GM12878 (cell line): ENCODE measurements at regions of chr12 and their contacts with region 1.

Region 1: DNA sequence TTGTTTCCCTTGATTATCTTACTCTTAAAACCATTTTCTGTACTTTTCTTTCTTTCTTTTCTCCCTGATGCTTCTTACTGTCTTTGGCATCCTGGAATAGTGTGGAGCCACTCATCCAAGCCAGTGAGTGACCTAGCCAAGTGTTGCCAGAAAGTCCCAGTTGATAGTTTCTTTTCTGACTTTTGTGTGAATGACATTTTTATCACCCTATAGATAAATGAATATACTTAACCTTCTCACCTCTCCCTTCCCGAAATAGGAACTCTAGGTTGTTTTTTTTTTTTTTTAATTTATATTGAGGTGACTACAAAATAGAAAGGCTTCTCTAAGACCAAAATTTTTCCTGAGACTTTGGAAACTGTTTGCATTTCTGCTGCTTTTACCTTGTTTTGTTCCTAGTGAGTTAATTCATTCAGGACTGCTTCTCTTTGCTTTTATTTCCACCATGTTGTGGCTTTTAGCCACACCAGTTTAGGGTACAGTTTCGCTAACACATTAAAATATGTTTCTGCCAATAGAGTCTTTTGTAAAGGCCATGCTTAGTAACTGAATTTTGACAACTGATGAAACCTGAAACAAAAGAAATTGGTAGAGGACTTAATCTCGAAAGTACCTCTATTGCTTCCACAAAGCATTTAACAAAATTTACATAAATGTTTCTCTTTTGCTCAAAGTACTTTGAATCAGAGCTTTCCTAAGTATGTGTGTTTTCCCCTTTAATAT is 194.6 kb downstream of the ERC1 start:
- DNase-seq: peak; percentile 56
- ATAC-seq: peak; percentile 97
- H3K4me3 ChIP-seq: 0 out of 2 replicates have a peak overlapping the region, but pooled peaks have one; percentile 44
- H3K27ac ChIP-seq: no peak overlapping the region; the same call in 1 of the 2 replicates
- H3K4me1 ChIP-seq: peaks cover 9% of the 10 kb centered on the region
- H3K27me3 ChIP-seq: no peaks in the 10 kb centered on the region
- CTCF ChIP-seq: no peak
- EP300 ChIP-seq: peak in 1 of 2 experiments; percentile 37; a peak in 1 of 4 replicates
- POLR2A ChIP-seq: no peak
- RAD21 ChIP-seq: no peak

Region 2: GRCh38 chr12:1173781-1174617 is 11.6 kb before region 1 on chr12:
- CTCF ChIA-PET with region 1: interaction called, 7 read pairs
- POLR2A ChIA-PET with region 1: no interaction called
- RAD21 ChIA-PET with region 1: no interaction called
- SMC1A ChIA-PET with region 1: interaction called, 11 read pairs
- in situ Hi-C with region 1: no loop called
- intact Hi-C with region 1: no loop called
- DNase-seq: no peak
- ATAC-seq: no peak
- H3K4me3 ChIP-seq: no peak overlapping the region
- H3K27ac ChIP-seq: no peak overlapping the region
- H3K4me1 ChIP-seq: no peaks in the 10 kb centered on the region
- H3K27me3 ChIP-seq: no peaks in the 10 kb centered on the region
- CTCF ChIP-seq: no peak
- EP300 ChIP-seq: no peak
- POLR2A ChIP-seq: no peak
- RAD21 ChIP-seq: no peak

Region 3: DNA sequence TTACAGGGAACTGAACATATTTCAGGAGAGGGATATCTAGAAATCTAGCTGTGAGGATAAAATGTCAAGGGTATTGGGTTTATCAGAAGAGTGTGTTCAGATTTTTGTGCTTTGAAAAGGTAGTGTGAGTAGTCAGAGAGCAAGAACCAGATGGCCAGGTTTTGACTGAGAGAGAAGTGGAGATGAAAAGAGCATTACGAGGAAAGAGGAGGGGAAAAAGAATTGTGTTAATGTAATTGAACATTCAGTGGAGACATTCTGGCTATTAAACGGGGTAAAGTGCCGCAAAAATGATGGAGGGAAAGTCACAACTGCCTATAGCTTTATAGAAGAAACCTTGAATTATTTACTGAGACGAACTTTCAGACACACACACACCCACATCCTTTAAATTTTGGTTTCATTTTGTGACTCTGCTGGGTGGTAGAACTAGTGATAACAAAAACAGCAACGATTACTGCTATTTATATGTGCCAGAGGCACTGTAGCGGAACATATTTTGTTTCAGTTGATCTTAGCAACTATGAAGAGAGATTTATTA is 19.0 kb after region 1 on chr12:
- CTCF ChIA-PET with region 1: no interaction called
- POLR2A ChIA-PET with region 1: no interaction called
- RAD21 ChIA-PET with region 1: interaction called, 3 read pairs
- SMC1A ChIA-PET with region 1: interaction called, 13 read pairs
- in situ Hi-C with region 1: no loop called
- intact Hi-C with region 1: no loop called
- DNase-seq: peak; percentile 56
- ATAC-seq: peak; percentile 99
- H3K4me3 ChIP-seq: peak overlapping the region; percentile 57
- H3K27ac ChIP-seq: peak overlapping the region; percentile 62; the same call in 1 of the 2 replicates
- H3K4me1 ChIP-seq: 0 out of 2 replicates have a peak, but pooled peaks cover 4% of the 10 kb centered on the region
- H3K27me3 ChIP-seq: no peaks in the 10 kb centered on the region
- CTCF ChIP-seq: no peak
- EP300 ChIP-seq: peak; percentile 32 to 87; a peak in 2 of 4 replicates
- POLR2A ChIP-seq: no peak
- RAD21 ChIP-seq: no peak

Region 4: DNA sequence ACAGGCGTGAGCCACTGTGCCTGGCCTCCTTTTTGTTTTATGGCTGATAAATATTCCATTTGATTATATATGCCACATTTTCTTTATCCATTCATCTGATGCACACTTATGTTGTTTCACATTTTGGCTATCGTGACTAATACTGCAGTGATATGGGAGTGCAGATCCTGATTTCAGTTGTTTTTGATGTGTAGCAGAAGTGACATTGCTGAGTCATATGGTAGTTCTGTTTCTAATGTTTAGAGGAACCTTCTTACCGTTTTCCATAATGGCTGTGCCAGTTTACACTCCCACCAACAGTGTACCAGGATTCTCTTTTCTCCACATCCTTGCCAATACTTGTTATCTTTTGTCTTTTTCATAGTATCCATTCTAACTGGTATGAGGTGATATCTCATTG is 41.3 kb after region 1 on chr12:
- CTCF ChIA-PET with region 1: no interaction called
- POLR2A ChIA-PET with region 1: no interaction called
- RAD21 ChIA-PET with region 1: no interaction called
- SMC1A ChIA-PET with region 1: no interaction called
- in situ Hi-C with region 1: no loop called
- intact Hi-C with region 1: no loop called
- DNase-seq: no peak
- ATAC-seq: peak; percentile 78
- H3K4me3 ChIP-seq: no peak overlapping the region
- H3K27ac ChIP-seq: no peak overlapping the region
- H3K4me1 ChIP-seq: peaks cover 10% of the 10 kb centered on the region
- H3K27me3 ChIP-seq: no peaks in the 10 kb centered on the region
- CTCF ChIP-seq: no peak
- EP300 ChIP-seq: no peak
- POLR2A ChIP-seq: no peak
- RAD21 ChIP-seq: no peak